ENCODE measurements at regions of chr12 and their contacts with region 1.

Region 1: GRCh38 chr12:60494244-60494643 is 898.4 kb downstream of the SLC16A7 start:
- DNase-seq: peak; percentile 32
- ATAC-seq: peak; percentile 63
- H3K4me3 ChIP-seq: no peak overlapping the region
- H3K27ac ChIP-seq: no peak overlapping the region
- H3K4me1 ChIP-seq: no peaks in the 10 kb centered on the region
- H3K27me3 ChIP-seq: no peaks in the 10 kb centered on the region
- CTCF ChIP-seq: peak; percentile 64
- EP300 ChIP-seq: no peak
- POLR2A ChIP-seq: no peak
- RAD21 ChIP-seq: no peak

Region 2: GRCh38 chr12:59403259-59403932 is 1090.8 kb before region 1 on chr12:
- CTCF ChIA-PET with region 1: no interaction called
- POLR2A ChIA-PET with region 1: no interaction called
- in situ Hi-C with region 1: no loop called
- intact Hi-C with region 1: loop called (anchors 5 kb)
- DNase-seq: peak; percentile 44
- ATAC-seq: peak; percentile 87
- H3K4me3 ChIP-seq: no peak overlapping the region
- H3K27ac ChIP-seq: no peak overlapping the region
- H3K4me1 ChIP-seq: no peaks in the 10 kb centered on the region
- H3K27me3 ChIP-seq: no peaks in the 10 kb centered on the region
- CTCF ChIP-seq: peak; percentile 71
- EP300 ChIP-seq: no peak
- POLR2A ChIP-seq: no peak
- RAD21 ChIP-seq: no peak

Region 3: GRCh38 chr12:60106214-60106613 is 388.0 kb before region 1 on chr12:
- CTCF ChIA-PET with region 1: no interaction called
- POLR2A ChIA-PET with region 1: no interaction called
- in situ Hi-C with region 1: no loop called
- intact Hi-C with region 1: loop called (anchors 1 kb)
- DNase-seq: no peak
- ATAC-seq: no peak
- H3K4me3 ChIP-seq: no peak overlapping the region
- H3K27ac ChIP-seq: no peak overlapping the region
- H3K4me1 ChIP-seq: no peaks in the 10 kb centered on the region
- H3K27me3 ChIP-seq: no peaks in the 10 kb centered on the region
- CTCF ChIP-seq: no peak
- EP300 ChIP-seq: no peak
- POLR2A ChIP-seq: no peak
- RAD21 ChIP-seq: no peak

Region 4: DNA sequence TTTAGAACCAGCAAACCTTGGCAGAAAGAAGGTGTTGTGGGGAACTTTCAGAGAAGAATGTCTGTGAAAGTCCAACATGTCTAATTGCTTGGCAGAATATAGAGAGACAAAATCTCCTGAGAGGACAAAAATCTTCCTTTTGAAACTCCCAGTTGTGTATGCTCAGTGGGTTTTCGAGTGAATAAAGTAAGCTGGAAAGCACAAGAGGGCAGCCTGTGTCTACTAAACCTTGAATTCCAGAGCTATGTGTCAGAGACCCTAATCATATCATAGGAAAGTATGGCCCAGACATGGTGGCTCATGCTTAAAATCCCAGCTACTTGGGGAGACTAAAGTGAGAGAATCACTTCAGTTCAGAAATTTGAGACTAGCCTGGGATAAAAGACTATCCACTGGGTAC is 237.2 kb before region 1 on chr12:
- CTCF ChIA-PET with region 1: interaction called, 6 read pairs
- POLR2A ChIA-PET with region 1: no interaction called
- in situ Hi-C with region 1: no loop called
- intact Hi-C with region 1: loop called (anchors 1 kb)
- DNase-seq: peak; percentile 17
- ATAC-seq: peak; percentile 77
- H3K4me3 ChIP-seq: no peak overlapping the region
- H3K27ac ChIP-seq: no peak overlapping the region
- H3K4me1 ChIP-seq: no peaks in the 10 kb centered on the region
- H3K27me3 ChIP-seq: no peaks in the 10 kb centered on the region
- CTCF ChIP-seq: peak; percentile 50
- EP300 ChIP-seq: no peak
- POLR2A ChIP-seq: no peak
- RAD21 ChIP-seq: no peak

Region 5: DNA sequence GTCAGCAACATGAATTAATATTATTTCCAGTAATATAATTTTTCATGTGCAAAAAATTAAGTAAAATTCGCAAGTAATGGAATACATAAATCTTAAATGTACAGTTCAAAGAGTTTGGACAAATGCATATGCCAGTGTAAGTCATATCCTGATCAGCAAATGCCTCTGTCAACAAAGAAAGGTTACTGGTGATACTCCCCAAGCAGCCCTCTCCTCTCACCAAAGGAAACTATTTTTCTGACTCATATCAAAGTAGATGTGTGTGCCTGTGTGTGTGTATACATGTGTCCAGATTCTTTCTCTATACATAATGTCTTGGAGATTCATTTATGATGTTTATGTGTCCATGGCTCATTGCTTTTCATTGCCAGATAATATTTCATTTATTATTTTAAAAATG is 136.6 kb after region 1 on chr12:
- CTCF ChIA-PET with region 1: no interaction called
- POLR2A ChIA-PET with region 1: no interaction called
- in situ Hi-C with region 1: no loop called
- intact Hi-C with region 1: no loop called
- DNase-seq: no peak
- ATAC-seq: no peak
- H3K4me3 ChIP-seq: no peak overlapping the region
- H3K27ac ChIP-seq: no peak overlapping the region
- H3K4me1 ChIP-seq: no peaks in the 10 kb centered on the region
- H3K27me3 ChIP-seq: no peaks in the 10 kb centered on the region
- CTCF ChIP-seq: no peak
- EP300 ChIP-seq: no peak
- POLR2A ChIP-seq: no peak
- RAD21 ChIP-seq: no peak

Measured in HepG2 (cell line).